ENCODE measurements at regions of chr4 and their contacts with region 1.

Region 1: GRCh38 chr4:173334085-173334772 is at the start of gene HMGB2:
- DNase-seq: peak; percentile 100
- total RNA-seq, gene HMGB2: 23.7 to 51.5 TPM

Region 2: DNA sequence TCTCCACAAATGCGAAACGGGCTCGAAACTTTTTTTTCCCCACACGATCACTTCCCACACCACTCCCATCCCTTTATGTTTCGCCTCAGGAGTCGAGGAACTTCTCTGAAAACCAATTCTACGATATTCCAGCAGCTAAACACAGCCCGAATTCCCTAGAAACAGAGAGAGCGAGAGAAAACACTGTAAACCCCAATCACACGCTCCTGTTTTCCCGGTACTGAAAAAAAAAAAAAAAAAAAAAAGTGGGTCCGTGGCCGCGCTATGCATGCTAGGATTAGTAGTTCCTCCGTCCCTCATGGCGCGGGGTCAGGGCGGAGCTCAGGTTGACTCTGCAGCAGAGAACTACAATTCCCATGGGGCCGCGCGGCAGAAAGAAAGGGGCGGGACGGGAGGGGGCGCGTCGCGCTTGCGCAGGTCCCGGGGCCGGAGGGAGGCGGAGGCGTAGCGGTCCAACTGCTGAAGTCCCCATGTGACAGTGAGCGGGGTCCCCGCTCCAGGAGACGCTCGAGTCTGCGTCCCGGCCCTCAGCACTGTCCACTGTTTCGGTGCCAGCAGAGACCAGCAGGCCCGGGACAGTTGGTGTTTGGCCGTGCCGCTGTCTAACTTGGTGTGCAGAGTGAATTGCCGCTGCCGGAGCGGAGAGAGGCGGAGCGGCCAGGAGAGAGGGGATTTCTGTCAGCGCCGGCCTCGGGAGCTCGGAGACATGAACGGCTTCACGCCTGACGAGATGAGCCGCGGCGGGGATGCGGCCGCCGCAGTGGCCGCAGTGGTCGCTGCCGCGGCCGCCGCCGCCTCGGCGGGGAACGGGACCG is 36.5 kb after region 1 on chr4 and contains the start of gene SAP30:
- intact Hi-C with region 1: loop called in 1 of 2 experiments (anchors 2 kb)
- DNase-seq: peak; percentile 100
- total RNA-seq, gene SAP30: 28.8 to 34.4 TPM

Measured in posterior vena cava (tissue), 2 donors.